Ovary (tissue), 10 donors: ENCODE measurements at regions of chr5 and their contacts with region 1.

Region 1: DNA sequence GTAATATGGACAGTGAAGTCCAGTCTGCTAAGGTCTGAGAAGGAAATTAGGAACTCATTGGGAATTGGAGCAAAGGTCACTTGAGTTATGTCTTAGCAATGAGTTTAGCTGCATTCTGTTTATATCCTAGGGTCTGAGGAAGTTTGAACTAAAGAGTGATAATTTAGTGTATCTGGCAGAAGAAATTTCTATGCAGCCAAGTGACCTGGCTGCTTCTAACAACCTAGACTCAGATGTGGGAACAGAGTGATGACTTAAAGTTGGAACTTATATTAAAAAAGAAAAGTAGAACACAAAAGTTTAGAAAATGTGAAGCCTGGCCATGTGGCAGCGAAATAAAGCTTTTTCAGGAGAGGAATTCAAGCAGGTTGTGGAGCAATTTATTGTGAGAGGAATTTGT is 106.2 kb downstream of the PRDM9 start:
- DNase-seq: no peak
- H3K4me3 ChIP-seq: no peak overlapping the region
- H3K27ac ChIP-seq: no peak overlapping the region
- H3K4me1 ChIP-seq: no peaks in the 10 kb centered on the region
- H3K27me3 ChIP-seq: no peaks in the 10 kb centered on the region
- CTCF ChIP-seq: no peak
- EP300 ChIP-seq: no peak
- POLR2A ChIP-seq: no peak

Region 2: DNA sequence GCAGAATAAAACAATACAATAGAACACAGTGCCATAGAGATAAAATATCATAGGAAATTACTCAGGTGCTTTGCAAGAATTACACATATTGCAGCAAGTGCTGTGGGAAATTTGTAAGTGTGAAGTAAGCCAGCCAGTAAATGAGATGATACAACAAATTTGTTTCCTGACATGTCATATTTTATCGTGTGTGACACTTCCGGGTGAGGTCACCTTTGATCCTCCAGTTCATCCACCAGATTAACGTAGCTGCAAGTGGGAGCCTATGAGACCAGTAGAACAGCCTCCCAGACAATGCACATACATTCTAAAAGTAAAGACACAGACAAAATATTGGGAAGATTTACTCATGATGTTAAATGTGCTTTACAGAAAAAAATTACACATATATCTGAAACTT is 34.0 kb before region 1 on chr5:
- intact Hi-C with region 1: loop called in 1 of 4 experiments (anchors 2 kb)
- DNase-seq: no peak
- H3K4me3 ChIP-seq: no peak overlapping the region
- H3K27ac ChIP-seq: no peak overlapping the region
- H3K4me1 ChIP-seq: no peaks in the 10 kb centered on the region
- H3K27me3 ChIP-seq: no peaks in the 10 kb centered on the region
- CTCF ChIP-seq: no peak
- EP300 ChIP-seq: no peak
- POLR2A ChIP-seq: no peak